ENCODE measurements at regions of chr2 and their contacts with region 1.

Region 1: DNA sequence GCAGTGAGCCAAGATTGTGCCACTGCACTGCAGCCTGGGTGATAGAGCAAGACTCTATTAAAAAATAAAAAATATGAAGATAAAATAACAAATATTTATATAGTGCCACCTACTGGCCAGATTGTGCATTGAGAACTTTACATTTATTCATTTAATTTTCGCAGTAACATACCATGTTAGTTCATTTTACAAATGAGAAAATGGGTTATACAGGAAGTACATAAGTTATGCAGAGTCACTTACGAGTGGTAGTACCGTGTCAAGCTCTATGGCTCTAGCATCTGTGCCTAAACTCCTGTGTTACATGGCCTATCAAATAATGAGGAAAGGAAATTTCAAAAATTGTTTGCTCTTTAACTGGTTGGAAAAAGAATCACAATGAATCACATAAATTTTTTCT is 27.9 kb downstream of the RIF1 start:
- H3K4me3 Mint-ChIP-seq: no peak overlapping the region
- H3K27ac Mint-ChIP-seq: no peak overlapping the region
- H3K4me1 Mint-ChIP-seq: no peaks in the 10 kb centered on the region
- H3K27me3 Mint-ChIP-seq: no peaks in the 10 kb centered on the region

Region 2: DNA sequence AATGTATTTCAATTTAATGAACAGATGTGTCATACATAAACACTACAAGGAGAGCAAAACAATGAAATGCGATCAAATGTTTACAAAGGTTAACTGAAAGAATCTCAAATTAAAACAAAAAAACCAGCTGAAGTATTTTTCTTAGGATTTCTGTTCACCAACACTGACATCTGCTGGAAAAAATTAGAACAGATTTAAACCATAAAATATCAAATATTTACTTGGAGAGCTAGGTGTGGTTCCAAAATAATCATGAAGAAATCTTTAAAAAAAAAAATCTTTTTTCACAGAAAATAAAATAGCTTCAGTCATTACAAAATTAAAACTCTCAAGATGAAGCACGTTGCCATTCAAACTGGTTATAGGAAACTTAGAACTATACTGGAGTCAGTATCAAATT is 1863.9 kb before region 1 on chr2:
- intact Hi-C with region 1: loop called (anchors 10 kb)
- H3K4me3 Mint-ChIP-seq: no peak overlapping the region
- H3K27ac Mint-ChIP-seq: no peak overlapping the region
- H3K4me1 Mint-ChIP-seq: peaks cover 10% of the 10 kb centered on the region
- H3K27me3 Mint-ChIP-seq: no peaks in the 10 kb centered on the region

Region 3: DNA sequence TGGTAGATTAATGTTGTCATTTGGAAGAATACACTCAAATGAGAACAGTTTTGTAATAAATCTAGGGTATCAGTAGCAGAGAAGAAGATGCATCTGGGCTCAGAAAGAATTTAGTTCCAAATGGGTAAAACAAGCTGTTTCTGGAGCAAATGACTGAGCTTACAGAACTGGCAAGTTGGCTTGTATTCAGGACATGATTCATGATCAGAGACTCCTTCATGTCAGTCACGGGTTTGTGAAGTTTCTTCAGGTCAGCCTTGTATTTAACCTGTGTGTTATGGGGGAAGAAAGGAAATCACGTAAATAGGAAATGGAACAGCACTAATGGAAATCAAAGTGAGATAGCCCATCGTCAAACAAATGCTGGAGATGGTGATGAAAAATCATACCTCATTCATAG is 81.2 kb after region 1 on chr2:
- intact Hi-C with region 1: no loop called
- H3K4me3 Mint-ChIP-seq: no peak overlapping the region
- H3K27ac Mint-ChIP-seq: no peak overlapping the region
- H3K4me1 Mint-ChIP-seq: no peaks in the 10 kb centered on the region
- H3K27me3 Mint-ChIP-seq: no peaks in the 10 kb centered on the region

Region 4: GRCh38 chr2:152676461-152676860 is 1238.8 kb after region 1 on chr2:
- intact Hi-C with region 1: loop called (anchors 10 kb)
- H3K4me3 Mint-ChIP-seq: no peak overlapping the region
- H3K27ac Mint-ChIP-seq: no peak overlapping the region
- H3K4me1 Mint-ChIP-seq: no peaks in the 10 kb centered on the region
- H3K27me3 Mint-ChIP-seq: no peaks in the 10 kb centered on the region

Measured in dendritic cell treated with granulocyte-macrophage colony-stimulating factor and Interleukin-4, amounts not matched to agents 40 ng/mL and 50 ng/mL, for 4 days (primary cell).